CD4-positive, alpha-beta T cell (primary cell): ENCODE measurements at regions of chr17 and their contacts with region 1.

Region 1: GRCh38 chr17:58006924-58007780 is at the start of gene SRSF1:
- DNase-seq: peak; percentile 95 to 100 (median 97)
- ATAC-seq: peak; percentile 86
- H3K4me3 ChIP-seq: peak within 1 kb of the TSS; percentile 83
- H3K4me3 Mint-ChIP-seq: peak within 1 kb of the TSS; percentile 98
- H3K27ac ChIP-seq: peak within 1 kb of the TSS; percentile 93 to 97
- H3K27ac Mint-ChIP-seq: peak within 1 kb of the TSS; percentile 99
- H3K4me1 ChIP-seq: peaks cover 29% of the 10 kb centered on the region
- H3K4me1 Mint-ChIP-seq: peaks cover 57% of the 10 kb centered on the region
- H3K27me3 ChIP-seq: no peaks in the 10 kb centered on the region
- H3K27me3 Mint-ChIP-seq: no peaks in the 10 kb centered on the region
- CTCF ChIP-seq: no peak
- total RNA-seq, gene SRSF1: 115 to 121 TPM

Region 2: GRCh38 chr17:57084802-57085447 is 922.2 kb before region 1 on chr17 and contains the start of gene AKAP1:
- CTCF ChIA-PET with region 1: interaction called, 8 read pairs
- POLR2A ChIA-PET with region 1: interaction called, 4 read pairs
- intact Hi-C with region 1: loop called in 1 of 2 experiments (anchors 2 kb)
- DNase-seq: peak; percentile 87 to 99 (median 94)
- ATAC-seq: peak; percentile 88
- H3K4me3 ChIP-seq: peak within 1 kb of the TSS; percentile 89
- H3K4me3 Mint-ChIP-seq: peak within 1 kb of the TSS; percentile 95
- H3K27ac ChIP-seq: peak within 1 kb of the TSS; percentile 84 to 85
- H3K27ac Mint-ChIP-seq: peak within 1 kb of the TSS; percentile 89
- H3K4me1 ChIP-seq: peaks cover 20% of the 10 kb centered on the region
- H3K4me1 Mint-ChIP-seq: peaks cover 36% of the 10 kb centered on the region
- H3K27me3 ChIP-seq: no peaks in the 10 kb centered on the region
- H3K27me3 Mint-ChIP-seq: no peaks in the 10 kb centered on the region
- CTCF ChIP-seq: no peak
- total RNA-seq, gene AKAP1: 20.3 to 23.1 TPM

Region 3: GRCh38 chr17:57772774-57773173 is 234.4 kb before region 1 on chr17:
- CTCF ChIA-PET with region 1: no interaction called
- POLR2A ChIA-PET with region 1: no interaction called
- intact Hi-C with region 1: no loop called
- DNase-seq: no peak
- ATAC-seq: no peak
- H3K4me3 ChIP-seq: no peak overlapping the region
- H3K4me3 Mint-ChIP-seq: no peak overlapping the region
- H3K27ac ChIP-seq: no peak overlapping the region
- H3K27ac Mint-ChIP-seq: no peak overlapping the region
- H3K4me1 ChIP-seq: no peaks in the 10 kb centered on the region
- H3K4me1 Mint-ChIP-seq: no peaks in the 10 kb centered on the region
- H3K27me3 ChIP-seq: peaks cover 8 to 11% of the 10 kb centered on the region in 2 experiments
- H3K27me3 Mint-ChIP-seq: peaks cover 87% of the 10 kb centered on the region
- CTCF ChIP-seq: no peak

Region 4: GRCh38 chr17:57849874-57850754 is 157.0 kb before region 1 on chr17 and contains the start of gene MRPS23:
- CTCF ChIA-PET with region 1: interaction called, 6 read pairs
- POLR2A ChIA-PET with region 1: interaction called, 61 read pairs
- intact Hi-C with region 1: loop called in 1 of 2 experiments (anchors 1 kb)
- DNase-seq: peak; percentile 92 to 99 (median 95)
- ATAC-seq: peak; percentile 91
- H3K4me3 ChIP-seq: peak within 1 kb of the TSS; percentile 99
- H3K4me3 Mint-ChIP-seq: peak within 1 kb of the TSS; percentile 95
- H3K27ac ChIP-seq: peak within 1 kb of the TSS; percentile 88 to 93
- H3K27ac Mint-ChIP-seq: peak within 1 kb of the TSS; percentile 97
- H3K4me1 ChIP-seq: peaks cover 42% of the 10 kb centered on the region
- H3K4me1 Mint-ChIP-seq: peaks cover 45% of the 10 kb centered on the region
- H3K27me3 ChIP-seq: no peaks in the 10 kb centered on the region
- H3K27me3 Mint-ChIP-seq: no peaks in the 10 kb centered on the region
- CTCF ChIP-seq: no peak
- total RNA-seq, gene MRPS23: 14.6 to 14.7 TPM

Region 5: DNA sequence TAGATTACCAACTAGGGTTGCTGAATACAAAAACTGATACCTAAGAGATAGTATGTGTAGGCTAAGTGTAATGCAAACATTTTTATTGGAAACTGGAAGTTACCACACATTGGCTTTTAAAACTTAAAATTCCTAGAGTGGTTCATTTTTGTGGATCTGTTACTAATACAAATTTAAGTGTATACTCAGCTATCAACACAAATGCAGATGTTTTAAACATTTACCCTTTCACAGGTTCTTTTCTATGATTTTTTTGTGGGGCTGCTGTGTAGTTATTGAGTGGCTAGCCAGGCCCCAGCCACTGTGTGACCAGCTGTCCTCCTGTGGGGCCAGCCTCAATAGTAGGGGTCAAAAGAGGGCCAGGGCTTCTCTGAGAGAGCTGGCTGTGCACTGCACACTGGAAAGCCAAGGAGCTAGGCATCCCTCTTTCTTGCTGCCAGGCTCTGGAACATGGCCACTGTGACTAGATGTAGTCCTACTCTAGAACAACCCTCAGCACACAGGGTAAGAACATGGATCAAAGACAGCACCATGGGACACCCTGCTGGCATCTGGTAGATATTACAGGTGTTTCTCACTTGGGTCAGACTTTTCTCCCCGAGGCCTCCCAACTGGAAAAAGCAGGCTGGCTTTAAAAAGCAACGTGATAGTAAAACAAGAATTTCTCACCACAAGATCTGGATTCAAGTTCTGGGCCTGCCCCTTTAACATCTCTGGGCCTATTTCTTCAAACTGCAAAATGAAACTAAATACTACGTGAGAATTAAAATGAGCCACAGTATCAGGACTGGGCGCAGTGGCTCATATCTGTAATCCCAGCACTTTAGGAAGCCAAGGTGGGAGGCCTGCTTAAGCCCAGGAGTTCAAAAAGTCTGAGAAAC is 11.8 kb before region 1 on chr17:
- CTCF ChIA-PET with region 1: interaction called, 3 read pairs
- POLR2A ChIA-PET with region 1: interaction called, 94 read pairs
- intact Hi-C with region 1: loop called in 1 of 2 experiments (anchors 1 kb)
- DNase-seq: peak; percentile 27 to 81 (median 41)
- ATAC-seq: peak; percentile 89
- H3K4me3 ChIP-seq: no peak overlapping the region
- H3K4me3 Mint-ChIP-seq: peak overlapping the region; percentile 25
- H3K27ac ChIP-seq: peak overlapping the region; percentile 9 to 12
- H3K27ac Mint-ChIP-seq: peak overlapping the region; percentile 37
- H3K4me1 ChIP-seq: peaks cover 15% of the 10 kb centered on the region
- H3K4me1 Mint-ChIP-seq: peaks cover 56% of the 10 kb centered on the region
- H3K27me3 ChIP-seq: no peaks in the 10 kb centered on the region
- H3K27me3 Mint-ChIP-seq: no peaks in the 10 kb centered on the region
- CTCF ChIP-seq: peak; percentile 73

Region 6: GRCh38 chr17:58156839-58157803 is 150.0 kb after region 1 on chr17:
- CTCF ChIA-PET with region 1: no interaction called
- POLR2A ChIA-PET with region 1: interaction called, 14 read pairs
- intact Hi-C with region 1: no loop called
- DNase-seq: peak; percentile 28 to 82 (median 45)
- ATAC-seq: peak; percentile 50
- H3K4me3 ChIP-seq: peak overlapping the region; percentile 76
- H3K4me3 Mint-ChIP-seq: peak overlapping the region; percentile 91
- H3K27ac ChIP-seq: peak overlapping the region; percentile 75 to 86
- H3K27ac Mint-ChIP-seq: peak overlapping the region; percentile 92
- H3K4me1 ChIP-seq: peaks cover 55% of the 10 kb centered on the region
- H3K4me1 Mint-ChIP-seq: peaks cover 84% of the 10 kb centered on the region
- H3K27me3 ChIP-seq: no peaks in the 10 kb centered on the region
- H3K27me3 Mint-ChIP-seq: no peaks in the 10 kb centered on the region
- CTCF ChIP-seq: no peak

Region 7: GRCh38 chr17:58219001-58219788 is 212.0 kb after region 1 on chr17 and contains the start of gene MKS1:
- CTCF ChIA-PET with region 1: no interaction called
- POLR2A ChIA-PET with region 1: interaction called, 10 read pairs
- intact Hi-C with region 1: loop called in 1 of 2 experiments (anchors 5 kb)
- DNase-seq: peak; percentile 92 to 97 (median 95)
- ATAC-seq: peak; percentile 97
- H3K4me3 ChIP-seq: peak within 1 kb of the TSS; percentile 88
- H3K4me3 Mint-ChIP-seq: peak within 1 kb of the TSS; percentile 90
- H3K27ac ChIP-seq: peak within 1 kb of the TSS; percentile 62 to 79
- H3K27ac Mint-ChIP-seq: peak within 1 kb of the TSS; percentile 90
- H3K4me1 ChIP-seq: peaks cover 16% of the 10 kb centered on the region
- H3K4me1 Mint-ChIP-seq: peaks cover 25% of the 10 kb centered on the region
- H3K27me3 ChIP-seq: no peaks in the 10 kb centered on the region
- H3K27me3 Mint-ChIP-seq: no peaks in the 10 kb centered on the region
- CTCF ChIP-seq: peak; percentile 78
- total RNA-seq, gene MKS1: 4.6 to 6.4 TPM

Region 8: DNA sequence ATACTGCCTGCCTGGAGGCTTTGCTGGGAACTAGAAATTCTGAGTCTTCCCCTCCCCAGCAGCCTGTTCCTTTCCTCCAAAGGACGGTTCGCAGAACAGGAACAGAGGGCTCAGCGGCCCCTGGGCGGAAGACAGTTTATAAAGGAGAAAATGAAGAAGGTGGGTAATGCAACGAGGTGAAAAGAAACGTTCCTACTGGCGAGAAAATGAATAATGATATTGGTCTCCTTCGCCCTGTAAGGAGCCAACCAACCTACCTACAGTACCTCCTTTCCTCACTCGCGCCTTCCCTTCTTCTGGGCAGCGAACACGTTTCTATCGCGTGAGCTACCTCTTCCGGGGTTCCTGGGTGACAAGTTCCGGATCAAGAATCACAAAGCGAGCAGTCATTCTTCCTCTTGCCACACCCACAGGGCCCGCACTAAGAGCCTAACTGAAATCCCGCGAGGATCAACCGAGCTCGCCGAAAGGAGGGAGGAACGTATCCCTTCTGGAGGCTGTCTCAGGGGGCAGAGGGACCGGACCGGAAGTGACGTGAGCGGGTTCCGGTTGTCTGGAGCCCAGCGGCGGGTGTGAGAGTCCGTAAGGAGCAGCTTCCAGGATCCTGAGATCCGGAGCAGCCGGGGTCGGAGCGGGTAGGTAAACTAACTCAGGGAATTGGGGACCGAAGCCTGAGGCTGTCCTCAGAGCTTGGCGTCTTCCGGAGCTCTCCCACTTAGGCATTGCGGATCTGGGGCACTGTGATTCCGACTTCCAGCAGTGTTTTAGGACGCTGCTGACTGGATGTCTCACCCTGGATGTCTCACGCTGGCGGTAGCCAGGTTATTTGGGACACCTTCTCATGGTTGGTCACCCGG is 1700.2 kb after region 1 on chr17 and contains the starts of genes PTRH2 and VMP1:
- CTCF ChIA-PET with region 1: no interaction called
- POLR2A ChIA-PET with region 1: no interaction called
- intact Hi-C with region 1: loop called in 1 of 2 experiments (anchors 10 kb)
- DNase-seq: peak; percentile 67 to 98 (median 81)
- ATAC-seq: peak; percentile 90
- H3K4me3 ChIP-seq: peak within 1 kb of the TSS; percentile 95
- H3K4me3 Mint-ChIP-seq: peak within 1 kb of the TSS; percentile 93
- H3K27ac ChIP-seq: peak within 1 kb of the TSS; percentile 80 to 96
- H3K27ac Mint-ChIP-seq: peak within 1 kb of the TSS; percentile 94
- H3K4me1 ChIP-seq: peaks cover 37% of the 10 kb centered on the region
- H3K4me1 Mint-ChIP-seq: peaks cover 81% of the 10 kb centered on the region
- H3K27me3 ChIP-seq: no peaks in the 10 kb centered on the region
- H3K27me3 Mint-ChIP-seq: no peaks in the 10 kb centered on the region
- CTCF ChIP-seq: no peak
- total RNA-seq, gene PTRH2: 6.5 to 7.3 TPM
- total RNA-seq, gene VMP1: 73.6 to 81.1 TPM